Sigmoid colon (tissue), 7 donors: ENCODE measurements at regions of chr3 and their contacts with region 1.

Region 1: GRCh38 chr3:32667122-32667521 is 17.9 kb upstream of the CNOT10 start:
- DNase-seq: no peak
- H3K4me3 ChIP-seq: no peak overlapping the region
- H3K27ac ChIP-seq: no peak overlapping the region
- H3K4me1 ChIP-seq: no peaks in the 10 kb centered on the region
- H3K27me3 ChIP-seq: no peaks in the 10 kb centered on the region
- CTCF ChIP-seq: no peak
- EP300 ChIP-seq: no peak
- POLR2A ChIP-seq: no peak

Region 2: GRCh38 chr3:32296256-32297204 is 370.6 kb before region 1 on chr3:
- intact Hi-C with region 1: loop called (anchors 5 kb)
- DNase-seq: peak; percentile 76
- H3K4me3 ChIP-seq: no peak overlapping the region
- H3K27ac ChIP-seq: no peak overlapping the region
- H3K4me1 ChIP-seq: no peaks in the 10 kb centered on the region
- H3K27me3 ChIP-seq: no peaks in the 10 kb centered on the region
- CTCF ChIP-seq: peak; percentile 53 to 92 (median 65)
- EP300 ChIP-seq: no peak
- POLR2A ChIP-seq: no peak

Region 3: DNA sequence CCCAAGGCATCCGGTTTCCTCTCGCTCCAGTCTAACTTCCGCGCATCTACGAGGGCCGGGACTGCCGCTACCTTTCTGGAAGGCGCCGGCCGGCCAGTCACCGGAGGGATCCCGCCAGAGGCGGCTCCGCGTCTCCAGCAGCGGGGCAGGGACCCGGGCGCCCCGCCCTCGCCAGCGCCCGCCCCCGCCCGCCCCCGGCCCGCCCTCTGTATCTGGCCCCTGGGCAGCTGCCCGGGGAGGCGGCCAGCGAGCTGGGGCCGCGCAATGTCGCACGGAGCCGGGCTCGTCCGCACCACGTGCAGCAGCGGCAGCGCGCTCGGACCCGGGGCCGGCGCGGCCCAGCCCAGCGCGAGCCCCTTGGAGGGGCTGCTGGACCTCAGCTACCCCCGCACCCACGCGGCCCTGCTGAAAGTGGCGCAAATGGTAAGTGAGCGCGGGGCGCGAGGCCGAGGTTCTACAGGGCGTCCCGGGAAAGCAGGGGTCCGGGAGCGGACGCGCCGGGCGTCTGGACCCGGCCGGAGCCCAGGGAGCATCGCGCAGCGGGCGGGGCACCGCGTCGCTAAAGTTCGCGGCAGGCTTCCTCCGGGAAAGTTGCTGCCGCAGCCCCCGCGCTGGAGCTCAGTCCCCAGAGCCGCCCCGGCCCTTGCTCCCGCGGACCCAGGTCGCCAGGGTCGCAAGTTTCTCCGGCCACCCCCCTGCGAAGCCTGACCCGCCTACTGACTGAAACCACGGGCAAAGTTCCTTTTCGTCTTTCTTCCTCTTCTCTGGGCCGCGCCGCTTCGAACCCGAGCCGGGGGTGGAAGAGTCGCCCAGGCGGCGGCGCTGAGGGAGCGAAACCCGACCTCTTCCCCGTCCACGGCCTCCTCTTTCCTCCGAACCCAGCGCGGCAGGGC is 275.2 kb before region 1 on chr3 and contains the start of gene CMTM7:
- intact Hi-C with region 1: loop called (anchors 10 kb)
- DNase-seq: peak; percentile 82
- H3K4me3 ChIP-seq: peak within 1 kb of the TSS; percentile 48 to 71 (median 68)
- H3K27ac ChIP-seq: peak within 1 kb of the TSS; percentile 63 to 82 (median 69)
- H3K4me1 ChIP-seq: peaks cover 0 to 12% (median 9%) of the 10 kb centered on the region in 4 donors
- H3K27me3 ChIP-seq: no peaks in the 10 kb centered on the region
- CTCF ChIP-seq: no peak
- EP300 ChIP-seq: no peak
- POLR2A ChIP-seq: no peak
- total RNA-seq, gene CMTM7: 7.1 to 9.9 (median 8.2) TPM

Region 4: DNA sequence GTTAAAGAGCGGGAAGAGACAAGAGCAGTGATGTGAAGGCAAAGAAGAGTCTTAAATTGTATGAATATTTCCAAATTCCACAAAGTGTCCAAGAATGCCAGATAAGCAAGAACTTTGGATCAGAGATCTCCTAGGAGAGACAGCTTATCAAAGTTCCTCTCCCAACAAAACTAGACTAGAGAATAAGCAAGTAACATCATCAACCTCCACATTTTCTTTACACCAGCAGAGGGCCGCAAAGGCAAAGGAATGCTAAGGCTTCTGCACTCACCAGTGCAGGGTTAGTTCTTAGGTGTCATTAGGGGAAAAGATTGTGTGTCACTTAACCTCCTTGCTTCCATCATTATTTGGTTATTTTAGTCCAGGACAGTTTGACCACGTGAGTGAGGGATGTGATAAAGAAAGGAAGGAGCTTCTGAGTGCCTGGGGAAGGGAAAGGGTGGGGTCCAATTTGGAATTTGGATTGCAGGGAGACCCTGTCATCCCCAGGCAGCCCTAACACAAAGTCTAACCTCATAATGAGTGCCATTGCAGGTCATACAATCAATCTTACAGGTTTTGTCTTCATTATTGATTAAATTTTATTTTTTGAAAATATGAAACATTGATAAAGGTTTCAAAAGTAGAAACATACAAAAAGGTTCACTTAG is 156.9 kb before region 1 on chr3:
- intact Hi-C with region 1: loop called (anchors 5 kb)
- DNase-seq: peak; percentile 76
- H3K4me3 ChIP-seq: no peak overlapping the region
- H3K27ac ChIP-seq: no peak overlapping the region
- H3K4me1 ChIP-seq: no peaks in the 10 kb centered on the region
- H3K27me3 ChIP-seq: no peaks in the 10 kb centered on the region
- CTCF ChIP-seq: peak; percentile 54 to 69 (median 62)
- EP300 ChIP-seq: no peak
- POLR2A ChIP-seq: no peak